B cell (primary cell): ENCODE measurements at regions of chr10 and their contacts with region 1.

Region 1: GRCh38 chr10:42782446-42783180 is at the start of gene BMS1:
- DNase-seq: peak; percentile 92
- ATAC-seq: peak; percentile 86
- H3K4me3 ChIP-seq: peak within 1 kb of the TSS; percentile 70 to 93 (median 85)
- H3K4me3 Mint-ChIP-seq: peak within 1 kb of the TSS; percentile 96
- H3K27ac ChIP-seq: peak within 1 kb of the TSS; percentile 77 to 81
- H3K27ac Mint-ChIP-seq: peak within 1 kb of the TSS; percentile 89
- H3K4me1 ChIP-seq: peaks cover 12 to 13% of the 10 kb centered on the region in 2 donors
- H3K4me1 Mint-ChIP-seq: peaks cover 24% of the 10 kb centered on the region
- H3K27me3 ChIP-seq: no peaks in the 10 kb centered on the region
- H3K27me3 Mint-ChIP-seq: peaks cover 6% of the 10 kb centered on the region
- CTCF ChIP-seq: no peak
- total RNA-seq, gene BMS1: 17.1 and 17.5 TPM in 2 replicates

Region 2: DNA sequence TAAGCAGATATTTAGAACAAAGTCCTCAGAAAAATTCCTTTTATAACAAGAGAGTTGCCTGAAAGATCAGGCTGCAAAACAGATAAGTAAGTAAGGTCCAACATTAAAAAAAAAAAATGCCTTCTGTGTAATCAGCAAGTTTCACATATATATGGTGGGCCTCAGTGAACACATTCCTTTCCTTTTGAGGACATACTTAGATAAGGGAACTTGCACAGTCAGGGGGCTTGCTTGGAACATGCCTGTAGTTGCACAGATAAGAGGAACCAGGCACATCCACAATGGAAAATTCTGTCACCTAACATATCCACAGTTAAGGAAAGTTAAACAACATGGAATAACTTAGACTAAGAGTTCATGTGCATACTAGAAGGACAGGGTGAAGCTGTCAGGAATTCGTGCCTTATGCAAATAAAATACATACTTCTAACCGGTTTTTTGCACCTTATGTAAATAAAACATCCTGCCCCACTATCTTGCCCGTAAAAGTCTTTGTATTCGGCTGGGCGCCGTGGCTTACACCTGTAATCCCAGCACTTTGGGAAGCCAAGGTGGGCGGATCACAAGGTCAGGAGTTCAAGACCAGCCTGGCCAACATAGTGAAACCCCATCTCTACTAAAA is 401.6 kb before region 1 on chr10:
- CTCF ChIA-PET with region 1: no interaction called
- POLR2A ChIA-PET with region 1: no interaction called
- intact Hi-C with region 1: no loop called
- DNase-seq: no peak
- ATAC-seq: no peak
- H3K4me3 ChIP-seq: no peak overlapping the region
- H3K4me3 Mint-ChIP-seq: no peak overlapping the region
- H3K27ac ChIP-seq: no peak overlapping the region
- H3K27ac Mint-ChIP-seq: no peak overlapping the region
- H3K4me1 ChIP-seq: no peaks in the 10 kb centered on the region
- H3K4me1 Mint-ChIP-seq: no peaks in the 10 kb centered on the region
- H3K27me3 ChIP-seq: no peaks in the 10 kb centered on the region
- H3K27me3 Mint-ChIP-seq: no peaks in the 10 kb centered on the region
- CTCF ChIP-seq: no peak

Region 3: DNA sequence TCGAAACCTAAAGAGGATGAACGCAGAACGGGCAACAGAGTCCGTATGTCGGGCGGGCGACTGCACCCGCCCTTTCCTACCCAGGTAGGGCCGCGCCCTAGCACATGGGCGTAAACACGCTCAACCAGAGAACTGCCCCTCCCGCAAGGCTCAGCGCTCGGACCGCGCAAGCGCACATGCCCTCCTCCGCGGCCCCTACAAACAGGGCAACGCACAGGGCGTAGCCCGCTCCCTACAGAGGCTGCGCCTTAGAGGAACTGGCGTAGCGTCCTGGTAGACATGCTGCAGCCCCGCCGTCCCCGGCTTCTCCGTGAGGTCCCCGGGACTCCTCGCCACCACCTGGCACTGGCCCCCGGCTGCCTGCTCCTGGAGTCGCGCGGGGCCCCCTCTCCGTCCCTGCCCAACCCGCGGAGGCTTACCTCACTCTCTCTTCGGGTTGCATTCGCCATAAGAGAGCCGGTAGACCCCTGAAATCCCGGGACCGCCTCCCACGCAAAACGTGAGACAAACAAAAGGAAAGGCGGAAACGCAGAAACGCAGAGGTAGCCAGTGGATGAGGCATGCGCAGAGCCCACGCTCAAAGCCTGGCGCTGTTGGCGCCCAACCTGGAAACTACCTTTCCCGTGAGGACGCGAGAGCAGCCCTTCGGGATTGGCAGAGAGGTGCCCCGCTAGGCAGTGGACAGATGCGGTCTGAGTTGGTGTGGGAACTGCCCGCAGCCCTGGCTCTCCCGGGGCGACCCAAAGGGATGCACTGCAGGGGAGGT is 144.4 kb before region 1 on chr10 and contains the start of gene ZNF33B:
- CTCF ChIA-PET with region 1: no interaction called
- POLR2A ChIA-PET with region 1: interaction called, 4 read pairs
- intact Hi-C with region 1: loop called (anchors 1 kb)
- DNase-seq: peak; percentile 95
- ATAC-seq: peak; percentile 94
- H3K4me3 ChIP-seq: peak within 1 kb of the TSS; percentile 86 to 97 (median 90)
- H3K4me3 Mint-ChIP-seq: peak within 1 kb of the TSS; percentile 99
- H3K27ac ChIP-seq: peak within 1 kb of the TSS; percentile 87 to 92
- H3K27ac Mint-ChIP-seq: peak within 1 kb of the TSS; percentile 99
- H3K4me1 ChIP-seq: peaks cover 14 to 15% of the 10 kb centered on the region in 2 donors
- H3K4me1 Mint-ChIP-seq: peaks cover 40% of the 10 kb centered on the region
- H3K27me3 ChIP-seq: no peaks in the 10 kb centered on the region
- H3K27me3 Mint-ChIP-seq: no peaks in the 10 kb centered on the region
- CTCF ChIP-seq: no peak
- total RNA-seq, gene ZNF33B: 66.6 and 66.9 TPM in 2 replicates